ENCODE measurements at regions of chr1 and their contacts with region 1.

Region 1: GRCh38 chr1:31182352-31182751 is 57.3 kb downstream of the NKAIN1 start:
- DNase-seq: peak in 1 of 2 experiments; percentile 95
- H3K4me3 ChIP-seq: peak overlapping the region in 1 of 4 experiments; percentile 44; a peak in 2 of 8 replicates
- H3K27ac ChIP-seq: no peak overlapping the region
- H3K4me1 ChIP-seq: no peaks in the 10 kb centered on the region
- H3K27me3 ChIP-seq: no peaks in the 10 kb centered on the region
- CTCF ChIP-seq: no peak
- EP300 ChIP-seq: no peak
- POLR2A ChIP-seq: no peak
- RAD21 ChIP-seq: no peak; a peak in 1 of 4 replicates

Region 2: GRCh38 chr1:31203215-31203614 is 20.9 kb after region 1 on chr1:
- CTCF ChIA-PET with region 1: interaction called, 59 read pairs
- POLR2A ChIA-PET with region 1: no interaction called
- DNase-seq: no peak
- H3K4me3 ChIP-seq: no peak overlapping the region
- H3K27ac ChIP-seq: no peak overlapping the region
- H3K4me1 ChIP-seq: peaks cover 0 to 4% (median under 1%) of the 10 kb centered on the region in 4 experiments; a peak in 4 of 7 replicates
- H3K27me3 ChIP-seq: no peaks in the 10 kb centered on the region
- CTCF ChIP-seq: no peak
- EP300 ChIP-seq: no peak
- POLR2A ChIP-seq: no peak
- RAD21 ChIP-seq: no peak

Region 3: GRCh38 chr1:31227891-31228568 is 45.7 kb after region 1 on chr1:
- CTCF ChIA-PET with region 1: interaction called, 146 read pairs
- POLR2A ChIA-PET with region 1: no interaction called
- DNase-seq: no peak
- H3K4me3 ChIP-seq: no peak overlapping the region
- H3K27ac ChIP-seq: no peak overlapping the region
- H3K4me1 ChIP-seq: no peaks in the 10 kb centered on the region; a peak in 1 of 7 replicates
- H3K27me3 ChIP-seq: no peaks in the 10 kb centered on the region
- CTCF ChIP-seq: no peak
- EP300 ChIP-seq: no peak
- POLR2A ChIP-seq: no peak
- RAD21 ChIP-seq: no peak

Region 4: DNA sequence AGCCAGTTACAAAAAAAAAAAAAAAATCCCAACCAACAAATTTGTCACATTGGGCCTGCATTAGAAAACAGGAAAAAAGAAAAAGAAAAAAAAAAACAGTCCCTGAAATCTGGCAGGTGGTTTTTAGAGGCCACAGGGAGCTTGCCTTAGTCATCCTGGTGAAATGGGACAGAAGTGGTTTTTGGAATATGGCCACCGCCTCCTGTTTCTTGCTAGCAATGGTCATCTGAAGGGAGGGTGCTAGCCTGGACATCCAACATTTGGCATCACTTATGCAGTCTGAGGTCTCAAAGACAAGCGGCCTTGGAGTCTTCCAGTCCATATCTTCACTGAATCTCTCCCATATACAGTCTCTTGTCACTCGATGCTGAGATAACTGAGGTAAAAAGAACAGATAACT is 77.4 kb after region 1 on chr1:
- CTCF ChIA-PET with region 1: interaction called, 113 read pairs
- POLR2A ChIA-PET with region 1: interaction called, 6 read pairs
- DNase-seq: no peak
- H3K4me3 ChIP-seq: no peak overlapping the region
- H3K27ac ChIP-seq: no peak overlapping the region
- H3K4me1 ChIP-seq: no peaks in the 10 kb centered on the region
- H3K27me3 ChIP-seq: no peaks in the 10 kb centered on the region
- CTCF ChIP-seq: no peak
- EP300 ChIP-seq: no peak
- POLR2A ChIP-seq: no peak
- RAD21 ChIP-seq: no peak

Region 5: DNA sequence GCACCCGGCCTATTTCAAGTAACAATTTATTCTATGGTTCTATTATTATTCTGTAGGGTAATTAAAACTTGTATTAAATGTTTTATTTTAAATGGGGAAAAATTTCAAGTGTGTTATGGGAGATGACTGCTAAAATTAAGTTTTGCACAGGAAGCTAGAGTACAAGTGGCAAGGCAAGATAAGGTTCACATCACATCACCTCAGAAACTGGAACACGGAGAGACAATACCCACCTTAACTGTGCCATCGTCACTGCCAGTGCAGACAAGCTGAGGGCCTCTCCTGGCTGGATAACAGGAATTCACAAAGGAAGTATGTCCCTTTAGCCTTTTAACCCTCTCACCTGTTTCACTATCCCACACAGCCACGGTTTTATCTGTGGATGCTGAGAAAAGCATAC is 106.7 kb after region 1 on chr1:
- CTCF ChIA-PET with region 1: interaction called, 15 read pairs
- POLR2A ChIA-PET with region 1: interaction called, 4 read pairs
- DNase-seq: no peak
- H3K4me3 ChIP-seq: no peak overlapping the region
- H3K27ac ChIP-seq: no peak overlapping the region
- H3K4me1 ChIP-seq: no peaks in the 10 kb centered on the region
- H3K27me3 ChIP-seq: no peaks in the 10 kb centered on the region
- CTCF ChIP-seq: no peak
- EP300 ChIP-seq: no peak
- POLR2A ChIP-seq: no peak
- RAD21 ChIP-seq: no peak

Region 6: DNA sequence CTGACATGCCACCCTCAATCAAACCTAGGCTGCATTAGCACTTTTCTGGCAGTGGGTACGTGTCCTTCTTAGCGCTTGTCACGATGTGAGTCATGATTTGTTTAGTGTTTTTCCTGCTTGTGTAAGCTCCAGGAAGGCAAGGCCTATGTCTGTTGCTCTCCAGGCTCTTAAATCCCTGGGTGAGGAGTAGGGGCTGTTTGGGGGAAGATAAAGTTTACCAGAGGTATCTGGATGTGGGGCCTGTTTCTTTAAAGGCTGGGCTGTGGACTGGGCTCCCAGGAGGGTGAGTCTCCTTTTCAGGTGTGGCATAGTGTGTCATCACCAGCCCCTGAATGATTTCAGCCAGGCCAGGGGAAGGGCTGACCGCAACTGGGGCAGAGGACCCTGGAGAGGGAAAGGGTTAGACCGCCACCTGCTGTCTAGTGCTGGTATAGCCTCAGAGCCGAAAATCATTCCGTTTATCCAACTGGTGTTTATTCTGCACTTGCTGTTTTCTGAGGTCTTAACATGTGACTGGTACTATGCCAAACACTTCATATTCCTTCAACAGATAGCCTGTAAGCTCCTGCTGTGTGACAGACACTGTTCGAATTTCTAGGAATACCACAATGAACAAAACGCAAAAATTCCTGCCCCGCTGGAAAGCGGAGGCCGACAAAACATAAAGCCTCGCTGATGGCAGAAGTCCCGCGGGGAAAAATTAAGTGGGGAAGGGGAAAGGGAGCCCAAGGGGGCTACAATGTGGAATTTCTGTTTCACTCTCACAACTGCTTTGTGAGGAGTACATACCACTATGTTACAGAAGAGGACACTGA is 240.4 kb after region 1 on chr1:
- CTCF ChIA-PET with region 1: interaction called, 35 read pairs
- POLR2A ChIA-PET with region 1: no interaction called
- DNase-seq: peak in 1 of 2 experiments; percentile 95
- H3K4me3 ChIP-seq: no peak overlapping the region
- H3K27ac ChIP-seq: no peak overlapping the region
- H3K4me1 ChIP-seq: peaks cover 0 to 3% (median 2%) of the 10 kb centered on the region in 4 experiments; a peak in 1 of 7 replicates
- H3K27me3 ChIP-seq: no peaks in the 10 kb centered on the region
- CTCF ChIP-seq: peak; percentile 88 to 98 (median 88)
- EP300 ChIP-seq: no peak
- POLR2A ChIP-seq: no peak
- RAD21 ChIP-seq: peak; percentile 95 to 97

Measured in H1 (cell line).